ENCODE measurements at regions of chr1 and their contacts with region 1.

Region 1: DNA sequence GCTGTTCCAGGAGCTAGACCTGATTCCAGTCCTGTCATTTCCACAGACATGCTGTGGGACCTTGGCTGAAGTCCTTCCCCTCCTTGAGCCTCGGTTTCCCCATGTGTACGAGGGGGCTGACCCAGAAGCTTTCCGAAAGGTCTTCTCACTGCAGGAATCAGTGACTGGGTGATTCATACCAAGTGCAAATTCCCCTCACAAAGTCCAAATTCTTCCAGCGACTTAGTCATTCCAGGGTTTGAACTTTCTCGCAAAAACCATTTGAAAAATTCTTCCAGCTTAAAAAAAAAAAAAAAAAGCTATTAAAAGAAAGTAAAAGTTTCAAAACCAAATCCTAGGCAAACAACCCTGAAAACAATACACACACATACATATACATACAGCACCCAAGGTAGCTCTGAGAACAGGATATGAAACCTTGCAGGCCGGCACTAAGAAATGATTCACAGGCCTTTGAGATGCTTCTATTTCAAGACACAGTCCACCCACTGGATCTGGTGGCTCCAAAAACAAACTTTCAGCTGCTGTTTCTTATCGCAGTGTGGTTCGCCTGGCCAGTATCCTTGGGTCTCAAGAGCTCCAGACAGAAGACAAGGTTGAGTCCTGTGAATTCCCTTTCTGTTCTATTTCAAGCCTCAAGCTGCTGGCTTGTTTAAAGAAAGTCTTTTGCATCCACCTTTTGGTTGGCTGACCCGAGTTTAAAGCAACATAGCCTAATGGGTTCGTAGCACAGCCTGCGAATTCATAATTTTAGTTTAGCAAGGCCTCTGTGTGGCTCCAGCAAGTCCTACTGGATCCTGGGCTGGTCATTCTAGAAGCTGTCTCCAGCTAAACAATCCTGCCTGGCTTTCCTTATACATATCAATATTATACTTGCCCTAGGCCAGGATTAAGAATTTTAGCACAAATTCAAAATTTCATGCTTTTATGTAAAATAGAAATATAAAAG is 18.0 kb upstream of the ID3 start:
- DNase-seq: peak; percentile 92
- H3K4me3 ChIP-seq: peak overlapping the region; percentile 69
- H3K27ac ChIP-seq: peak overlapping the region; percentile 97
- H3K4me1 ChIP-seq: peaks cover 97% of the 10 kb centered on the region
- CTCF ChIP-seq: no peak

Region 2: GRCh38 chr1:23591460-23592208 is 14.3 kb after region 1 on chr1:
- CTCF ChIA-PET with region 1: interaction called, 11 read pairs
- POLR2A ChIA-PET with region 1: interaction called, 261 read pairs
- intact Hi-C with region 1: loop called (anchors 1 kb)
- DNase-seq: peak; percentile 90
- H3K4me3 ChIP-seq: peak overlapping the region; percentile 60
- H3K27ac ChIP-seq: peak overlapping the region; percentile 94
- H3K4me1 ChIP-seq: peaks cover 97% of the 10 kb centered on the region
- CTCF ChIP-seq: no peak

Region 3: GRCh38 chr1:23613191-23614031 is 36.1 kb after region 1 on chr1:
- CTCF ChIA-PET with region 1: interaction called, 5 read pairs
- POLR2A ChIA-PET with region 1: interaction called, 101 read pairs
- intact Hi-C with region 1: loop called (anchors 1 kb)
- DNase-seq: peak; percentile 96
- H3K4me3 ChIP-seq: peak overlapping the region; percentile 64
- H3K27ac ChIP-seq: peak overlapping the region; percentile 99
- H3K4me1 ChIP-seq: peaks cover 98% of the 10 kb centered on the region
- CTCF ChIP-seq: peak; percentile 46; the same call in 1 of the 2 replicates

Region 4: GRCh38 chr1:23627069-23627735 is 49.9 kb after region 1 on chr1:
- CTCF ChIA-PET with region 1: interaction called, 9 read pairs
- POLR2A ChIA-PET with region 1: interaction called, 101 read pairs
- intact Hi-C with region 1: no loop called
- DNase-seq: peak; percentile 87
- H3K4me3 ChIP-seq: peak overlapping the region; percentile 70
- H3K27ac ChIP-seq: peak overlapping the region; percentile 99
- H3K4me1 ChIP-seq: peaks cover 97% of the 10 kb centered on the region
- CTCF ChIP-seq: no peak